ENCODE measurements at regions of chr18 and their contacts with region 1.

Region 1: DNA sequence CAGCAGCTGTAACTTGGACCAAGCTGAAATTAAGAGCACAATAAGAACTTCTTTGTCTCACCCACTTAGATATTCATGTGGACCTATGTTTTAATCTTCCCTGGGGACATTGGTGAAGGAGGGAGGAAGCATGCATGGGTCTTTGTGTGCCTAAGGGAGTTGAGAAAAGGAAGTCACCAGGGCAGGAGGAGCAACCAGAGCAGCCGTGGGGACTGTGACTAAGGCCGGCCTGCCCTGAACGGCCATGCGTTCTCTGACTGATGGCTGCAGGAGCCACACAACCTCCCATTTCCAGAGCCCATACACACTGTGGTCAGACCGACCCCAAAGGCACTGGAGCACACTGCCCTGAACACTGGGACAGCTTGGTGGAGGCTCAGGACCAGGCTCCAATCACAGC is 43.7 kb upstream of the SLC35G4 start:
- DNase-seq: no peak
- H3K4me3 ChIP-seq: no peak overlapping the region
- H3K27ac ChIP-seq: no peak overlapping the region
- H3K4me1 ChIP-seq: no peaks in the 10 kb centered on the region
- H3K27me3 ChIP-seq: no peaks in the 10 kb centered on the region
- CTCF ChIP-seq: no peak
- POLR2A ChIP-seq: no peak

Region 2: GRCh38 chr18:11268741-11269233 is 296.9 kb before region 1 on chr18:
- intact Hi-C with region 1: no loop called
- DNase-seq: no peak
- H3K4me3 ChIP-seq: no peak overlapping the region
- H3K27ac ChIP-seq: no peak overlapping the region
- H3K4me1 ChIP-seq: peaks cover 6% of the 10 kb centered on the region
- H3K27me3 ChIP-seq: no peaks in the 10 kb centered on the region
- CTCF ChIP-seq: no peak
- POLR2A ChIP-seq: no peak

Region 3: GRCh38 chr18:11533942-11534496 is 31.7 kb before region 1 on chr18:
- intact Hi-C with region 1: loop called (anchors 2 kb)
- DNase-seq: no peak
- H3K4me3 ChIP-seq: no peak overlapping the region
- H3K27ac ChIP-seq: no peak overlapping the region
- H3K4me1 ChIP-seq: no peaks in the 10 kb centered on the region
- H3K27me3 ChIP-seq: no peaks in the 10 kb centered on the region
- CTCF ChIP-seq: no peak
- POLR2A ChIP-seq: no peak

Measured in prostate gland (tissue), 2 donors.